HEK293 (cell line): ENCODE measurements at regions of chr1 and their contacts with region 1.

Region 1: GRCh38 chr1:153192697-153193096 is 10.5 kb upstream of the LELP1 start:
- H3K4me3 ChIP-seq: no peak overlapping the region
- H3K27ac ChIP-seq: no peak overlapping the region
- H3K4me1 ChIP-seq: no peaks in the 10 kb centered on the region
- CTCF ChIP-seq: no peak

Region 2: GRCh38 chr1:152654110-152654509 is 538.6 kb before region 1 on chr1:
- CTCF ChIA-PET with region 1: interaction called, 25 read pairs
- POLR2A ChIA-PET with region 1: no interaction called
- H3K4me3 ChIP-seq: no peak overlapping the region
- H3K27ac ChIP-seq: no peak overlapping the region
- H3K4me1 ChIP-seq: no peaks in the 10 kb centered on the region
- CTCF ChIP-seq: 0 out of 2 replicates have a peak, but pooled peaks have one; percentile 35

Region 3: DNA sequence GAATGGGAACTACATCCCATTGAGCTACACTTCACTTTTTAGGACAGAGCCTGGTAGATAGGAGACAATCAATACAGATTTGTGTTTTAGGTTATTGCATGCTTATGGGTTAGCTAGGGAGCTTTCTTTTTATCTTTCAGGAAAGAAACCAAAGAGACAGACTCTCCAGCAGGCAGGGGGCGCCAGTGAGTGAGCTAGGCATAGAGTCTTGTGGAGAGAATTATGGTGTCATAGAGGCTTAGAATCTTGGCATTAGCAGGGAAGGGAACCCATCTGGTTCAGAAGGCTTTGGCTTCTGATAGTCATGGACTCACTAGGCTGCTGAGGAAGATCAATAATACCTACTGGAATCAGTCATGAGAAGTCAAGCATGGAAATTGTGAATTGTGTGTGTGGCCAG is 314.7 kb before region 1 on chr1 and contains the start of gene SMCP:
- CTCF ChIA-PET with region 1: interaction called, 71 read pairs
- POLR2A ChIA-PET with region 1: no interaction called
- H3K4me3 ChIP-seq: no peak within 1 kb of the TSS
- H3K27ac ChIP-seq: no peak within 1 kb of the TSS
- H3K4me1 ChIP-seq: no peaks in the 10 kb centered on the region
- CTCF ChIP-seq: no peak

Region 4: GRCh38 chr1:152917794-152918193 is 274.9 kb before region 1 on chr1:
- CTCF ChIA-PET with region 1: interaction called, 17 read pairs
- POLR2A ChIA-PET with region 1: no interaction called
- H3K4me3 ChIP-seq: no peak overlapping the region
- H3K27ac ChIP-seq: no peak overlapping the region
- H3K4me1 ChIP-seq: no peaks in the 10 kb centered on the region
- CTCF ChIP-seq: no peak

Region 5: GRCh38 chr1:152926091-152926490 is 266.6 kb before region 1 on chr1:
- CTCF ChIA-PET with region 1: interaction called, 14 read pairs
- POLR2A ChIA-PET with region 1: no interaction called
- H3K4me3 ChIP-seq: no peak overlapping the region
- H3K27ac ChIP-seq: no peak overlapping the region
- H3K4me1 ChIP-seq: no peaks in the 10 kb centered on the region
- CTCF ChIP-seq: no peak

Region 6: GRCh38 chr1:153155542-153155941 is 37.2 kb before region 1 on chr1:
- CTCF ChIA-PET with region 1: no interaction called
- POLR2A ChIA-PET with region 1: no interaction called
- H3K4me3 ChIP-seq: no peak overlapping the region
- H3K27ac ChIP-seq: no peak overlapping the region
- H3K4me1 ChIP-seq: no peaks in the 10 kb centered on the region
- CTCF ChIP-seq: no peak

Region 7: DNA sequence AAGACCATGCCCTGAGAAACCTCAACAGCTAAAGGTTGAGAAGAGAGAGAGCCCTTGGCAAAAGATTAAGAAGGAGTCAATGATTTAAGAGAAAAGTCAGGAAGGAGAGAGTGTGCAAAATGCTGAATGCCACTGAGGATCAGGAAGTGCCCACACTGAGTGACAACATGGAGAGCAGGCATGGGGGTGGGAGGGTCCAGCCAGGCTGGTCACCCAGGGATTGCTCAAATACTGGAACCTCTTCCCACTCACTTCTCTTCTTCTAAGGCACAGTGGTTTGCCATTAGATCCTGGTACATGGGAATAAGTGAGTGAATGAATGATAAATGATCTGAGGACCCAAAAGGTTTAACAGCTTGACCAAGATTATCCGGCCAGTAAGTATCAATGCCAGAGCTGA is 35.8 kb after region 1 on chr1:
- CTCF ChIA-PET with region 1: interaction called, 13 read pairs
- POLR2A ChIA-PET with region 1: no interaction called
- H3K4me3 ChIP-seq: no peak overlapping the region
- H3K27ac ChIP-seq: no peak overlapping the region
- H3K4me1 ChIP-seq: no peaks in the 10 kb centered on the region
- CTCF ChIP-seq: no peak

Region 8: DNA sequence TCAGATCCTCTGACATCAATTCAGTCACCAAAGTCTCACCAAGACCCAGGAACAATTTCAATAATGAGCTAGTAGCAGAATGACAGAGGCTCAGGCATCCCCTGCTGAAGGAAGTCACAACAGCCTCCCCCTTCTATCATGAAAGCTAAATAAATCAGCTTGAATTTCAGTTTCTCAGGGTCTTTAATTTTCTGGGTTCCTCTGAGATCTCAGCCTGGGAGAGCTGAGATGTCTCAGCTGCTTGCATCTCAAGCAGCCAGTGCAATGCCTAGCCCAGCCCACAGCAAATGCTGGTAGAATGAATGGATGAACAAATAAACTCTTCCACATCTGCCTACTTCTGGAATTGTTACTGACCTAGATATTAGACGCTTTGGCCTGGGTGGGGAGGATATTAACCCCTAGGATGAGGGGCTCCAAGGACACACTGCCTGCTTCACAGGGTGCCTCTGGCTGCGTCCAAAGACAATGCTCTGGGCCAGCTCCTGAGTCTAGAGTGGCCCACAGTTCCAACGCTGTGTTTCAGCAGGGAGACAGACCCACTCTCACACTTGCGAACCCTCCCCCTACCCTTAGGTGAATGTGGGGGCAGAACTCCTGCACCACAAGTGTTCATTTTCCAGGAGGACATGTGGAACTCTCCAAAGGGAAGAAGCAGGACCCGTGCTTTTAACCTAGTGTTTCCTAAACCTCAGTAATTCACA is 55.6 kb after region 1 on chr1:
- CTCF ChIA-PET with region 1: no interaction called
- POLR2A ChIA-PET with region 1: no interaction called
- H3K4me3 ChIP-seq: no peak overlapping the region
- H3K27ac ChIP-seq: no peak overlapping the region
- H3K4me1 ChIP-seq: no peaks in the 10 kb centered on the region
- CTCF ChIP-seq: no peak